ENCODE measurements at regions of chr20 and their contacts with region 1.

Region 1: DNA sequence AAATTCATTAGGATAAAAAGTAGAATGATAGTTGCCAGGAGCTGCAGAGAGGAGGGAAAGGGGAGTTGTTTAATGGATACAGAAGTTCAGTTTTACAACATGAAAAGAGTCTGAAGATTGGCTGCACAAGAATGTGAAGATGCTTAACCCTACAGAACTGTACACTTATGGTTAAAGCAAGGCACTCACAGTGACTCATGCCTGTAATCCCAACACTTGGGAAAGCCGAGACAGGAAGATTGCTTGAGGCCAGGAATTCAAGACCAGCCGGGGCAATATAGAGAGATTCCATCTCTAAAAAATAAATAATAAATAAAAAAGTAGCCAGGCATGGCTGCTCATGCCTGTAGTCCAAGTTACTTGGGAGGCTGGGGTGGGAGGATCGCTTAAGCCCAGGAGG is 174.0 kb downstream of the TASP1 start:
- DNase-seq: no peak
- ATAC-seq: no peak

Region 2: GRCh38 chr20:13546497-13547131 is 81.9 kb after region 1 on chr20:
- intact Hi-C with region 1: loop called (anchors 10 kb)
- DNase-seq: peak; percentile 81
- ATAC-seq: peak; percentile 48

Measured in left ventricle myocardium superior (tissue), 1 donor.